Aorta (tissue), 5 donors: ENCODE measurements at regions of chr1 and their contacts with region 1.

Region 1: GRCh38 chr1:56709269-56709880 is 64.3 kb downstream of the PRKAA2 start:
- DNase-seq: no peak
- ATAC-seq: no peak
- H3K4me3 ChIP-seq: no peak overlapping the region
- H3K27ac ChIP-seq: no peak overlapping the region
- H3K4me1 ChIP-seq: no peaks in the 10 kb centered on the region
- H3K27me3 ChIP-seq: no peaks in the 10 kb centered on the region

Region 2: GRCh38 chr1:55140546-55140983 is 1568.8 kb before region 1 on chr1:
- intact Hi-C with region 1: loop called in 1 of 2 experiments (anchors 10 kb)
- DNase-seq: peak in 1 of 2 donors; percentile 71
- ATAC-seq: peak; percentile 95
- H3K4me3 ChIP-seq: no peak overlapping the region
- H3K27ac ChIP-seq: no peak overlapping the region
- H3K4me1 ChIP-seq: no peaks in the 10 kb centered on the region
- H3K27me3 ChIP-seq: no peaks in the 10 kb centered on the region

Region 3: DNA sequence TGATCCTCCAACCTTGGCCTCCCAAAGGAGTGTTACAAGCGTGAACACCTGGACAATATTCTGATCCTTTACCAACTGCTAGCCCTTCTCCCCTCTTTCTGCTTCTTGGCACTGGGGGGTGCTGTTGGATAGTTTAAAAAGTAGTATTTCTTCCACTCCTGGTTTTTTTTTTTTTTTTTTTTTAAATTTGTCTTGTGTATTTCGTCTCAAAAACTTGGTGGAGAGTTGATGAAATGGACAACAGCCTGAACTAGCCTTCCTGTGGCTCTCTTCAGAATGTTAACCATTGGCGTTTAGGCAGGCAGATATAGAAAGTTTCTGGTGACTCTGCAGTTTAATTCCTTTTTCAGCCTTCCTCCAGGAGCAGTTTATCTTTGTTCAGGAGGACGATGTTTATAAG is 1424.5 kb before region 1 on chr1:
- intact Hi-C with region 1: loop called (anchors 5 to 10 kb)
- DNase-seq: no peak
- ATAC-seq: peak; percentile 49
- H3K4me3 ChIP-seq: no peak overlapping the region
- H3K27ac ChIP-seq: no peak overlapping the region
- H3K4me1 ChIP-seq: no peaks in the 10 kb centered on the region
- H3K27me3 ChIP-seq: no peaks in the 10 kb centered on the region

Region 4: GRCh38 chr1:55375617-55376258 is 1333.6 kb before region 1 on chr1:
- intact Hi-C with region 1: loop called in 1 of 2 experiments (anchors 5 kb)
- DNase-seq: no peak
- ATAC-seq: peak; percentile 69
- H3K4me3 ChIP-seq: no peak overlapping the region
- H3K27ac ChIP-seq: no peak overlapping the region
- H3K4me1 ChIP-seq: no peaks in the 10 kb centered on the region
- H3K27me3 ChIP-seq: no peaks in the 10 kb centered on the region